ENCODE measurements at regions of chr4 and their contacts with region 1.

Region 1: GRCh38 chr4:102620697-102621497 is 119.7 kb downstream of the NFKB1 start:
- DNase-seq: peak; percentile 71
- H3K4me3 ChIP-seq: peak overlapping the region; percentile 8 to 31 (median 18)
- H3K27ac ChIP-seq: peak overlapping the region; percentile 50
- H3K4me1 ChIP-seq: peaks cover 19% of the 10 kb centered on the region
- H3K27me3 ChIP-seq: no peaks in the 10 kb centered on the region
- CTCF ChIP-seq: peak; percentile 31 to 63

Region 2: GRCh38 chr4:102449751-102450352 is 171.0 kb before region 1 on chr4:
- CTCF ChIA-PET with region 1: no interaction called
- dilution Hi-C with region 1: no loop called
- in situ Hi-C with region 1: loop called in 1 of 2 experiments (anchors 25 kb)
- intact Hi-C with region 1: loop called (anchors 1 kb)
- DNase-seq: peak; percentile 51
- H3K4me3 ChIP-seq: no peak overlapping the region
- H3K27ac ChIP-seq: no peak overlapping the region
- H3K4me1 ChIP-seq: no peaks in the 10 kb centered on the region
- H3K27me3 ChIP-seq: no peaks in the 10 kb centered on the region
- CTCF ChIP-seq: peak; percentile 48 to 75

Region 3: DNA sequence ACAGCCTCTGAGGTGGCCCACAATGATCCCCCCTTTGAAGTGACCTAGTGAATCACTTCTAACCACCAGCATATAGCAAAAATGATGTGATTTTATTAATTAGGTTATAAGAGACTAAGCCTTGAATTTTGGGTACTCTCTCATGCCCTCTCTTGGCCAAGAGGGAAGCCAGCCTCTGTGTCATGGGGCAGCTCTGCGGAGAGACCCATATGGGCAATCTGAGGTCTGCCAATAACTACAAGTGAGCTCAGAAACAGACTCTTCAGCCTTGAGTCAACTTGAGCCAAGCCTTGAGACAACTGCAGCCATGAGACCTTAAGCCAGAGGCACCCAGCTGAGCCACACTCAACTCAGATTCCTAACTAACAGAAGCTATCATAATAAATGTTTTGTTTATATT is 94.2 kb after region 1 on chr4:
- CTCF ChIA-PET with region 1: interaction called, 4 read pairs
- dilution Hi-C with region 1: no loop called
- in situ Hi-C with region 1: no loop called
- intact Hi-C with region 1: loop called (anchors 1 kb)
- DNase-seq: no peak
- H3K4me3 ChIP-seq: no peak overlapping the region
- H3K27ac ChIP-seq: no peak overlapping the region
- H3K4me1 ChIP-seq: peaks cover 11% of the 10 kb centered on the region
- H3K27me3 ChIP-seq: no peaks in the 10 kb centered on the region
- CTCF ChIP-seq: peak in 1 of 2 donors; percentile 35

Region 4: GRCh38 chr4:102809691-102810090 is 188.8 kb after region 1 on chr4:
- CTCF ChIA-PET with region 1: no interaction called
- dilution Hi-C with region 1: loop called (anchors 5 kb)
- in situ Hi-C with region 1: no loop called
- intact Hi-C with region 1: no loop called
- DNase-seq: no peak
- H3K4me3 ChIP-seq: no peak overlapping the region
- H3K27ac ChIP-seq: peak overlapping the region; percentile 26
- H3K4me1 ChIP-seq: peaks cover 11% of the 10 kb centered on the region
- H3K27me3 ChIP-seq: no peaks in the 10 kb centered on the region
- CTCF ChIP-seq: no peak

Region 5: DNA sequence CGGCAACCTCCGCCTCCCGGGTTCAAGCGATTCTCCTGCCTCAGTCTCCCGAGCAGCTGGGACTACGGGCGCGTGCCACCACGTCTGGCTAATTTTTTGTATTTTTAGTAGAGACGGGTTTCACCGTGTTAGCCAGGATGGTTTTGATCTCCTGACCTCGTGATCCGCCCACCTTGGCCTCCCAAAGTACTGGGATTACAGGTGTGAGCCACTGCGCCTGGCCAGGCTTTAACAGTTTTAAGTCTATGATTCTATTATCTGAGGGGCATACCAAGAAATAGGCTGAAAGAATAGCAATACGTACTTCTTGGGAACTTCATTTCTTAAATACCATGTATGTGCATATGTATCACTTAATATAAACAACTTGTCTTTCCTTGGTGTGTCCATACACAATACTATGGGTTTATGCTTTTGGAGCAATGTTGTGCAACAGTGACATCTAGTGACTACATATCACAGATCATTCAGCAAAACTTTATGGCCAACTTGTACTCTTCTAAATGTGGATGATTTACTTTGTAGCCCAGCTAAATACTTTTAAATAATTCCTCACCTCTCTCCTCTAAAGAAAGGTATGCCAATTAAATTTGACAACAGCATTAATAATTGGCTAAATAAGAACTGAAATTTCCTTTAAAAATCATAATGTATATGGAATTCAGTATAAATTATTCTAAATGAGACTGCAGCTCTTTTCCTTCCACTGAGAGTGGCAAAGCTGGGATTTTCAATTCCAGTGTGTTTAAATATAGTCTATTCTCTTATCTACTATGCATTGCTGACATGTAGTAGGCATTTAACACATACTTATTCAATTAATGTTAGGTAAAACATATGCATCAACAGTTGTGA is 388.2 kb after region 1 on chr4:
- CTCF ChIA-PET with region 1: interaction called, 7 read pairs
- dilution Hi-C with region 1: loop called (anchors 25 kb)
- in situ Hi-C with region 1: loop called (anchors 5 kb)
- intact Hi-C with region 1: loop called (anchors 1 kb)
- DNase-seq: peak; percentile 56
- H3K4me3 ChIP-seq: no peak overlapping the region
- H3K27ac ChIP-seq: no peak overlapping the region
- H3K4me1 ChIP-seq: peaks cover 15% of the 10 kb centered on the region
- H3K27me3 ChIP-seq: no peaks in the 10 kb centered on the region
- CTCF ChIP-seq: peak; percentile 74 to 75

Region 6: DNA sequence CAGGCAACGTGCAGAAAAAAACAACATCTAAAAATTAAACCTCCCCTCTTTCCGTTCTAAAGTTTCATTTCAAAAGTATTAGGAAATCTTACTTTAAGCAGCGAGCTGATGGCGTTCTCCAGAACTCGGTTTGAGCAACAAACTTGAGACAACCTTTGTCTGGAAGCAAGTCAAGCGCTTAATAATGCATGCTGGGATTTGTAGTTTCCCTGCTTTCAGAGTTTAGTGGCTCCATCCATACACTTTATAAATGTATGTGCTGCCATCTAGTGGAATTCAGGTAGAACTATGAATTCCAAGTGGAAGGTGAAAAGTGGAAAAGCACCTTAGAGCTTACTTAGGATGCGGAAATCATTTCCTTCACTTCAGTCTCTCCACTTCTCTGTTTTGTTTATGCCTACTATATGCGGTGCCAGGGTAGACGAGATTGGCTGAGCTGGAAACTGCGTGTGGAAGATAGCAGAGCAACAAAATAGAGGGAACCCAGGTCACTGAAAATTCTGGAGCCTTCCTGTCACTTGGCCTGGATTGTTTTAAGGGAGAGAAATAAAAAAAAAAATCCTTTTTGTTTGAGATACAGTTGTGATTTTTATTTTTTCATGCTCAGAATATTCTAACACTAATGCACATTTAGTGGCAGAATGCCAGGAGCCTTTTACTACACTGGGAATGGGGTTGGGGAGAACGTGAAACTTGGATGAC is 478.9 kb after region 1 on chr4 and contains the start of gene BDH2:
- CTCF ChIA-PET with region 1: interaction called, 6 read pairs
- dilution Hi-C with region 1: no loop called
- in situ Hi-C with region 1: loop called (anchors 10 kb)
- intact Hi-C with region 1: loop called (anchors 2 kb)
- DNase-seq: peak; percentile 91
- H3K4me3 ChIP-seq: peak within 1 kb of the TSS; percentile 48 to 71 (median 55)
- H3K27ac ChIP-seq: peak within 1 kb of the TSS; percentile 54
- H3K4me1 ChIP-seq: no peaks in the 10 kb centered on the region
- H3K27me3 ChIP-seq: no peaks in the 10 kb centered on the region
- CTCF ChIP-seq: peak; percentile 64 to 68
- total RNA-seq, gene BDH2: 20.7 to 23.0 TPM